Prostate gland (tissue), 2 donors: ENCODE measurements at regions of chr1 and their contacts with region 1.

Region 1: GRCh38 chr1:207811920-207812720 is 60.3 kb downstream of the CD46 start:
- DNase-seq: peak; percentile 76
- H3K4me3 ChIP-seq: no peak overlapping the region
- H3K27ac ChIP-seq: peak overlapping the region; percentile 68 to 78
- H3K4me1 ChIP-seq: peaks cover 60% of the 10 kb centered on the region
- H3K27me3 ChIP-seq: no peaks in the 10 kb centered on the region
- CTCF ChIP-seq: peak; percentile 23 to 82 (median 56)
- POLR2A ChIP-seq: no peak

Region 2: GRCh38 chr1:207754974-207755689 is 57.0 kb before region 1 on chr1:
- intact Hi-C with region 1: no loop called
- DNase-seq: no peak
- H3K4me3 ChIP-seq: peak overlapping the region in 1 of 2 donors; percentile 95
- H3K27ac ChIP-seq: peak overlapping the region; percentile 95 to 97
- H3K4me1 ChIP-seq: peaks cover 3% of the 10 kb centered on the region
- H3K27me3 ChIP-seq: no peaks in the 10 kb centered on the region
- CTCF ChIP-seq: no peak
- POLR2A ChIP-seq: no peak

Region 3: GRCh38 chr1:207868774-207869721 is 56.9 kb after region 1 on chr1:
- intact Hi-C with region 1: loop called (anchors 10 kb)
- DNase-seq: peak; percentile 75
- H3K4me3 ChIP-seq: peak overlapping the region; percentile 79 to 90
- H3K27ac ChIP-seq: peak overlapping the region; percentile 99
- H3K4me1 ChIP-seq: peaks cover 14% of the 10 kb centered on the region
- H3K27me3 ChIP-seq: no peaks in the 10 kb centered on the region
- CTCF ChIP-seq: peak; percentile 80 to 99 (median 97)
- POLR2A ChIP-seq: peak; percentile 72

Region 4: GRCh38 chr1:207941665-207942064 is 129.5 kb after region 1 on chr1:
- intact Hi-C with region 1: no loop called
- DNase-seq: no peak
- H3K4me3 ChIP-seq: no peak overlapping the region
- H3K27ac ChIP-seq: no peak overlapping the region
- H3K4me1 ChIP-seq: no peaks in the 10 kb centered on the region
- H3K27me3 ChIP-seq: no peaks in the 10 kb centered on the region
- CTCF ChIP-seq: no peak
- POLR2A ChIP-seq: no peak